A549 (cell line): ENCODE measurements at regions of chr7 and their contacts with region 1.

Region 1: GRCh38 chr7:134729895-134730294 is 49.5 kb upstream of the CALD1 start:
- DNase-seq: no peak
- ATAC-seq: no peak
- H3K4me3 ChIP-seq: no peak overlapping the region
- H3K27ac ChIP-seq: no peak overlapping the region
- H3K4me1 ChIP-seq: no peaks in the 10 kb centered on the region
- CTCF ChIP-seq: no peak
- EP300 ChIP-seq: no peak
- POLR2A ChIP-seq: no peak
- RAD21 ChIP-seq: no peak

Region 2: GRCh38 chr7:134669845-134670373 is 60.0 kb before region 1 on chr7:
- CTCF ChIA-PET with region 1: no interaction called
- POLR2A ChIA-PET with region 1: no interaction called
- DNase-seq: peak; percentile 72 to 73
- ATAC-seq: peak; percentile 84 to 94
- H3K4me3 ChIP-seq: no peak overlapping the region
- H3K27ac ChIP-seq: peak overlapping the region; percentile 42 to 62; a peak in 5 of 6 replicates
- H3K4me1 ChIP-seq: peaks cover 16% of the 10 kb centered on the region
- CTCF ChIP-seq: no peak
- EP300 ChIP-seq: no peak
- POLR2A ChIP-seq: no peak
- RAD21 ChIP-seq: no peak

Region 3: GRCh38 chr7:134750083-134751062 is 20.5 kb after region 1 on chr7:
- CTCF ChIA-PET with region 1: interaction called, 10 read pairs
- POLR2A ChIA-PET with region 1: no interaction called
- DNase-seq: peak; percentile 35 to 56
- ATAC-seq: peak; percentile 64 to 96; a peak in 3 of 6 replicates
- H3K4me3 ChIP-seq: no peak overlapping the region
- H3K27ac ChIP-seq: no peak overlapping the region
- H3K4me1 ChIP-seq: no peaks in the 10 kb centered on the region
- CTCF ChIP-seq: peak; percentile 66
- EP300 ChIP-seq: no peak
- POLR2A ChIP-seq: no peak
- RAD21 ChIP-seq: peak; percentile 29 to 54; a peak in 2 of 5 replicates

Region 4: GRCh38 chr7:135441791-135442190 is 711.9 kb after region 1 on chr7:
- CTCF ChIA-PET with region 1: no interaction called
- POLR2A ChIA-PET with region 1: no interaction called
- DNase-seq: peak; percentile 15 to 52
- ATAC-seq: peak; percentile 89 to 91
- H3K4me3 ChIP-seq: no peak overlapping the region
- H3K27ac ChIP-seq: no peak overlapping the region; a peak in 1 of 6 replicates
- H3K4me1 ChIP-seq: peaks cover 23% of the 10 kb centered on the region; the same call in 2 of the 3 replicates
- CTCF ChIP-seq: no peak
- EP300 ChIP-seq: no peak
- POLR2A ChIP-seq: no peak
- RAD21 ChIP-seq: no peak